ENCODE measurements at regions of chr4 and their contacts with region 1.

Region 1: GRCh38 chr4:8351931-8352367 is 82.4 kb downstream of the HTRA3 start:
- DNase-seq: no peak
- H3K4me3 ChIP-seq: no peak overlapping the region
- H3K27ac ChIP-seq: no peak overlapping the region
- H3K4me1 ChIP-seq: peaks cover 38% of the 10 kb centered on the region
- H3K27me3 ChIP-seq: no peaks in the 10 kb centered on the region
- CTCF ChIP-seq: no peak

Region 2: DNA sequence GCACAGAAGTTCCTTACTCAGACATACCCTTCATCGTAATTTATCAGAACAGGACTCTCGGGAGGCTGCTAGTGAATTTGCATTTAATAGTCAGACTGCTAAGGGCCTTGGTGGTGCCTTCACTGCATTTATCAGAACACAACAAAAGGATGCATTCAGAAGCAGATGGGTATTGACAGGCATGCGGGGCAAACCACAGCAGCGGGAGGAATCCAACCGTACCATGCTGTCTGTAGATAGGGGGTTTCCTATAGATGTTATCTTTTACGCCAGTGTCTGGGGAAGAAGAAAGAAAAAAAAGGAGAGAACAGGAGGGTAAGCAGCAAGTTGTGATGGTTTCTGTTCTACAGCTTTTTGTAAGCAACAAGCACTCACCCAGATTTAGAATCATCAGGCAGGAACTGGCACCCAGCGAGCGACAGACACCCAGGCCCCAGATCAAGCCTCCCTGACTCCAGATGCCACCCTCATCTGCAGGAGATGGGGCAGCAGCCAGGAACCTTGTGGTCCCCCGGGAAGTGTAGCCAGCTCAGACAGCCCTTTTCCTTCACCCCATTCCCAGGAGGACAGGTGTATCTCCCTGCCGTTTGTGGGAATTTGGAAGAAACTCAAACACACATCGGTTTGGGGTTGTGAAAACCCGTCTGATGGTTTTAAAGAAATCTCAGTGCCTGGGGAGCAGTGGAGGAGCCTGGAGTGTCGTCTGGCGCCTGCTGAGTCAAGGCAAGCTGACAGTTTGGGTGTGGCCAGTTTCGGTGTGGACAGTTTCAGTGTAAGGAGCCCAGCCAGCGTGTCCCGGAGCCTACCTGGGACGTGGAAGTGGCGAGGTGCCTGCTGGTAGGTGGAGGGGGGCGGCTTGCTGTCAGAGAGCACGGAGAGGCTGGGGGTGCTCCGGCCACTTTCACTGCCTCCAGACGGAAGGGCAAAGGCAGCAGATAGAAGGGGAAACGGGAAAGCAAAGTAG is 332.3 kb before region 1 on chr4:
- CTCF ChIA-PET with region 1: no interaction called
- POLR2A ChIA-PET with region 1: no interaction called
- intact Hi-C with region 1: no loop called
- DNase-seq: peak; percentile 64 to 65
- H3K4me3 ChIP-seq: no peak overlapping the region
- H3K27ac ChIP-seq: no peak overlapping the region
- H3K4me1 ChIP-seq: peaks cover 10% of the 10 kb centered on the region; the same call in 1 of the 2 replicates
- H3K27me3 ChIP-seq: no peaks in the 10 kb centered on the region
- CTCF ChIP-seq: no peak

Region 3: DNA sequence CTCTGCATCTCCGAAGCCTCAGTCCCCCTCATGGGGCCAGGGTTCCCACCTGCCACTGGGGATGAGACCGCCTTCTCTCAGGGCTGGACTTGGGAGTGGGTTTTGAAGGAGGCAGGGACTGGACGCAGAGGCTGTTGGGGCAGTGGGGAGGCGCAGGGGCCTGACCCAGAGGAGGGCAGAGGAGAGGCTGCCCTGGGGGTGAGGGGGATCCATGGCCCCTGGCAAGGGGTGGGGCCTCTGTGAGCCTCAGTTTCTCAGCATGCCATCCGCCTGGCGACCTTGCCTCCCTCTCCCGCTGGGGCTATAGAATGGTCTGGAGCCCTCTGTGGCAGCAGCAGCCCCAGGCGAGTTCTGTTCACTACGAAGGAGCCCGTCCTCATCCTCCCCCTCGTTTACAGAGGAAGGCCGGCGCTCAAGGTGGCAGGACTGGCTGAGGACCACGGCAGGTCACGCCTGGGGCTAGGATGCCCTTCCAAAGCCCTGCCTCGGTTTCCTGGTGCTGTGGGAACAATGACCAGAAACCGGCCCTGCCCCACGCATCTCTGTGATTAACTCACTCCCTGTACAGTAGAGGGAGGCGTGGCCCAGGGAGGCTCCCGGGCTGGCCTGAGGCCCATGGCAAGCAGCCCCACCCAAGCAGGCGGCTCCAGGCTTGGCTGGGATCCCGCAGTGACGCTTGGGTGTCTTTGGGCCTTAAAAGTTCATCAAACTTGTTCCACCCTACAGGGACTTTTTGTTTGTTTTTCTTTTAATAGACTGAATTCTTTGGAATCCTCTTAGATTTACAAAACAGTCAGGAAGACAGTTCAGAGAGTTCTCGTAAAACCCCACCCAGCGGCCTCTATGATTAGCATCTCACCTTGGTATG is 168.9 kb before region 1 on chr4:
- CTCF ChIA-PET with region 1: no interaction called
- POLR2A ChIA-PET with region 1: no interaction called
- intact Hi-C with region 1: loop called (anchors 1 kb)
- DNase-seq: peak; percentile 97 to 98
- H3K4me3 ChIP-seq: no peak overlapping the region
- H3K27ac ChIP-seq: peak overlapping the region; percentile 75
- H3K4me1 ChIP-seq: peaks cover 40% of the 10 kb centered on the region
- H3K27me3 ChIP-seq: no peaks in the 10 kb centered on the region
- CTCF ChIP-seq: no peak

Region 4: GRCh38 chr4:8303485-8304301 is 48.3 kb before region 1 on chr4:
- CTCF ChIA-PET with region 1: interaction called, 3 read pairs
- POLR2A ChIA-PET with region 1: no interaction called
- intact Hi-C with region 1: loop called (anchors 5 kb)
- DNase-seq: peak in 1 of 2 experiments; percentile 28
- H3K4me3 ChIP-seq: no peak overlapping the region
- H3K27ac ChIP-seq: peak overlapping the region; percentile 51; the same call in 1 of the 2 replicates
- H3K4me1 ChIP-seq: peaks cover 14% of the 10 kb centered on the region
- H3K27me3 ChIP-seq: no peaks in the 10 kb centered on the region
- CTCF ChIP-seq: no peak

Region 5: DNA sequence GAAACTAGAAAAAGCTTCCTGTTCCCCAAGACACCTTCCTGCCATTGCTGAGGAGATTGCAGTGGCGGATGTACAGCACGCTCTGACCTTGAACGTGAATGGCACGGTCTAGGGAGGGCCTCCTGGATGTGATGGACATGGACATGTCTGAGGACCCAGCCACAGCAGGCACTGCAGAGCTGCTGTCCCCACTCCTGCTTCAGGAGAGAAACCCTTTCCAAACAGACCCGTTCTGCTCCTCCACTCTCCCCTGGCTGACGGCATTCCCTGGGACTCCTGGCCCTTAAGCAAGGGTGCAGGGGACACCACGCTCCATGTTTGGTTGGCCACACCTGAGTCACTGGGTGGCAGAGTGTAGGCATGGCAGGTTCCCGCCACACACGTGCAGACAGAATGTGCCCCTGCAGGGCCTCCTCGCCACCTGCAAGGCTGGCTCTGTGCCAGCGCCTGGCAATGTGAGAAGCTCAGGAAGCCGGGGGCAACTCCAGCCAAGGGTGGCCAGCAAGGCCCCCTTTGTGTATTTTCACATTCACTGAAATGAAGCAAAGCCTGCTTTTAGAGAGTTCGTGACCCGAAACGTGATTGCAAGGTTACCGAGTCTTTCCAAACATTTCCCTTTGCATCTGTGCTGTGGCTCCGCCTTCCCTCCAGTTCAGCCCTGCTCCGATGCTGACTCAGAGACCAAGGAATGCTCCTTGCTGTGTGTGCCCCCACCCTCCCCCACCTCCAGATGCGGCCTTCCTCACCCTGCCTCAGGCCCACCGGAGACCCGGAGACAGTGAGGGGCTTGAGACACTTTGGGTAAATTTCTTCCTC is 36.3 kb before region 1 on chr4:
- CTCF ChIA-PET with region 1: no interaction called
- POLR2A ChIA-PET with region 1: no interaction called
- intact Hi-C with region 1: loop called (anchors 1 kb)
- DNase-seq: peak; percentile 84 to 89
- H3K4me3 ChIP-seq: peak overlapping the region; percentile 18; the same call in 1 of the 2 replicates
- H3K27ac ChIP-seq: peak overlapping the region; percentile 59
- H3K4me1 ChIP-seq: peaks cover 24% of the 10 kb centered on the region
- H3K27me3 ChIP-seq: no peaks in the 10 kb centered on the region
- CTCF ChIP-seq: no peak

Region 6: GRCh38 chr4:8362483-8362882 is 10.5 kb after region 1 on chr4:
- CTCF ChIA-PET with region 1: interaction called, 4 read pairs
- POLR2A ChIA-PET with region 1: interaction called, 11 read pairs
- intact Hi-C with region 1: loop called (anchors 1 kb)
- DNase-seq: peak; percentile 61 to 95
- H3K4me3 ChIP-seq: no peak overlapping the region
- H3K27ac ChIP-seq: peak overlapping the region; percentile 47
- H3K4me1 ChIP-seq: peaks cover 36% of the 10 kb centered on the region
- H3K27me3 ChIP-seq: no peaks in the 10 kb centered on the region
- CTCF ChIP-seq: no peak

Region 7: DNA sequence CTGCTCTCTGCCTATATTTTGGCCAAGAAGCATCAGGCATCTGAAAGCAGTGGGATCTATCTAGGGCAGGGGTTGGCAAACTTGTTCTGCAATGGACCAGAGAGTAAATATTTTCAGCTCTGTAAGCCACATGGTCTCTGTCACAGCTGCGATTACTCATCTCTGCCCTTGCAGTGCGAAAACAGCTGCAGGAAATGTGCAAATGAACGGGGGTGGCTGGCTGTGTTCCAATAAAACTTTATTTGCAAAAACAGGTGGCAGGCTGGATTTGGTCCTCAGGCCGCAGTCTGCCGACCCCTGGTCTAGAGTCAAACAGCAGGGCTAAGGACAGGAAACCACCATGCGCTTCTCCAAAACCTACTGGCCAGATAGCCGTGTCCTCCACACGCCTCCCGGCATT is 40.0 kb after region 1 on chr4:
- CTCF ChIA-PET with region 1: no interaction called
- POLR2A ChIA-PET with region 1: no interaction called
- intact Hi-C with region 1: loop called (anchors 1 kb)
- DNase-seq: peak; percentile 45 to 78
- H3K4me3 ChIP-seq: no peak overlapping the region
- H3K27ac ChIP-seq: no peak overlapping the region
- H3K4me1 ChIP-seq: peaks cover 46% of the 10 kb centered on the region
- H3K27me3 ChIP-seq: no peaks in the 10 kb centered on the region
- CTCF ChIP-seq: no peak

Region 8: GRCh38 chr4:8547108-8547970 is 195.4 kb after region 1 on chr4:
- CTCF ChIA-PET with region 1: no interaction called
- POLR2A ChIA-PET with region 1: no interaction called
- intact Hi-C with region 1: loop called (anchors 5 kb)
- DNase-seq: peak; percentile 66 to 89
- H3K4me3 ChIP-seq: peak overlapping the region; percentile 28; the same call in 1 of the 2 replicates
- H3K27ac ChIP-seq: peak overlapping the region; percentile 98
- H3K4me1 ChIP-seq: peaks cover 46% of the 10 kb centered on the region
- H3K27me3 ChIP-seq: no peaks in the 10 kb centered on the region
- CTCF ChIP-seq: peak; percentile 47

Measured in PC-9 (cell line).